ENCODE measurements at regions of chr18 and their contacts with region 1.

Region 1: DNA sequence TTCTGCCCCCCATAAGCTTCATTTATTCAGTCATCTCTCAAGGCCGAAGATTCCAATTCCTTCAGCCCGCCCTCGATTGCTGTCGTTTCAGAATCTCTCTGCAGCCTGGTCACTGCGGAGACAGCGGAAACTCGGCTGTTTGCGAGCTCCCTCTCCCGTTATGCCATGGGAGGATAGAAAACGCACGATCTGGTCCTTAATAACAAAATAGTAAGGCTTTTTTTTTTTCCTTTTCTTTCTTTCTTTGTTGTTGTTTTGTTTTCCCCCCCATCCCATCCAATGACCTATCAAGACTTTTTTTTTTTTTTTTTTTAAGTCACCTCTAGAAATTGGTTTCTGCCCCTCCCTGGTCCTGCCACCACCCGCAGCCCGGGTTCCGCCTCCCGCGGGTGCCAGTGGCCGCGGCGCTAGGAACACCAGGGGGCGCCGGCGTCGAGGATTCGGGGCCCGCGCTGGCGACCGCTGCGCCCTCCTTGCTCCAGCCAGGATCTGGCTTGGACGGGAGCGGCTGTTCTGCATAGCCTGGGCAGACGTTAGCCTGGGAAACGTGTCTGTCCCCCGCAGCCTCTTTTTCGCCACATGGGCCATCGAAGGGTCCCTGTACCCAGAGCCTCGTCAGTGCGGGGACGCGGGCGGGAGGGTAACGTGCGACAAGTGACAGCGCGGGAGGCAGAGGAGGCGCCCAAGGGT is 10.1 kb downstream of the CPLX4 start:
- DNase-seq: peak; percentile 73
- ATAC-seq: peak; percentile 95
- H3K4me3 Mint-ChIP-seq: peak overlapping the region; percentile 52
- H3K27ac Mint-ChIP-seq: no peak overlapping the region
- H3K4me1 Mint-ChIP-seq: no peaks in the 10 kb centered on the region
- H3K27me3 Mint-ChIP-seq: peaks cover 47% of the 10 kb centered on the region

Region 2: GRCh38 chr18:59208602-59209125 is 99.7 kb before region 1 on chr18:
- CTCF ChIA-PET with region 1: no interaction called
- POLR2A ChIA-PET with region 1: no interaction called
- DNase-seq: no peak
- ATAC-seq: no peak
- H3K4me3 Mint-ChIP-seq: no peak overlapping the region
- H3K27ac Mint-ChIP-seq: no peak overlapping the region
- H3K4me1 Mint-ChIP-seq: no peaks in the 10 kb centered on the region
- H3K27me3 Mint-ChIP-seq: peaks cover 8% of the 10 kb centered on the region

Region 3: GRCh38 chr18:59318460-59319050 is 10.2 kb after region 1 on chr18 and contains the start of gene CPLX4:
- CTCF ChIA-PET with region 1: interaction called, 14 read pairs
- POLR2A ChIA-PET with region 1: no interaction called
- DNase-seq: no peak
- ATAC-seq: no peak
- H3K4me3 Mint-ChIP-seq: no peak within 1 kb of the TSS
- H3K27ac Mint-ChIP-seq: no peak within 1 kb of the TSS
- H3K4me1 Mint-ChIP-seq: no peaks in the 10 kb centered on the region
- H3K27me3 Mint-ChIP-seq: peaks cover 32% of the 10 kb centered on the region
- total RNA-seq, gene CPLX4: not detected

Region 4: DNA sequence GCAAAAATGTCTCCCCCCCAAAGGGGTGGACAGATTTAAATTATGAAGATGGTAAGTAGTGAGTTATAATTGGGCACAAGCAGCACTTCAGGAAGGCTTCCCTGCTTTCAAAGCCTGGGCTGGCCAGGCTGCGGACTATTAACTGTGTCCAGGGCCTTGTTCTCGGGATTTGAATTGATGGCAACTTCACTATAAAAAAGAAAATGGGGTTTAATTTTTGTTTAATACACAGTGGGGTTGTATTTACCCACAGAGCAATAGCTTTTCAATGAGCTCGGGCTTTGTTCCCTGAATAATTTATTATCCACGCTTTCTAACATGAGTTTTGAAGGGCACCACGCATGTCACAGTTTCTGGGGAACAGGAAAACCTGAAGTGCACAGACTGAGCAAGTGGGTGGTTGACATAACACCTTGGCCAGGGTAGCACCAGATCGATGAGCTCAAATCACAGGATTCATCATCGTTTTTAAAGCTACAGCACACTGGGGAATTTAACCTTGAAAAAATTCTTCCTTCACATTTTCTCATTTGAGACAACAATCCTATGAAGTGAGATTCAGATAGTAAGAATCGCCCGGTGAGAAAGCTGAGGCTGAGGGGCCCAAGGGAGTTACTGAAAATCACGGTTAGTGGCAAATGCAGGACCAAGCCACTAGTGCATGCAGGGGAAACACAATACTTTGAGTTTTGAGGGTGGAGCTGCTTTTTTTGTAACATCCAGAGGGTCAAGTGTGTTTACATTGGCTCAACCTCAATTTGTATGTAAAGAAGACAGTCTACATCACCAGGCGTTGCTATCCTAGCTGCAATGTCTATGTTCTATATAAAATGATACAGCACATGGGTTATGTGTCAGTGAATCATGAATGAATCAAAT is 79.5 kb after region 1 on chr18:
- CTCF ChIA-PET with region 1: interaction called, 11 read pairs
- POLR2A ChIA-PET with region 1: no interaction called
- DNase-seq: no peak
- ATAC-seq: no peak
- H3K4me3 Mint-ChIP-seq: no peak overlapping the region
- H3K27ac Mint-ChIP-seq: no peak overlapping the region
- H3K4me1 Mint-ChIP-seq: no peaks in the 10 kb centered on the region
- H3K27me3 Mint-ChIP-seq: peaks cover 16% of the 10 kb centered on the region

Region 5: GRCh38 chr18:59459369-59460079 is 151.1 kb after region 1 on chr18:
- CTCF ChIA-PET with region 1: interaction called, 11 read pairs
- POLR2A ChIA-PET with region 1: no interaction called
- DNase-seq: no peak
- ATAC-seq: no peak
- H3K4me3 Mint-ChIP-seq: no peak overlapping the region
- H3K27ac Mint-ChIP-seq: no peak overlapping the region
- H3K4me1 Mint-ChIP-seq: no peaks in the 10 kb centered on the region
- H3K27me3 Mint-ChIP-seq: peaks cover 5% of the 10 kb centered on the region